Prostate gland (tissue), 2 donors: ENCODE measurements at regions of chr18 and their contacts with region 1.

Region 1: DNA sequence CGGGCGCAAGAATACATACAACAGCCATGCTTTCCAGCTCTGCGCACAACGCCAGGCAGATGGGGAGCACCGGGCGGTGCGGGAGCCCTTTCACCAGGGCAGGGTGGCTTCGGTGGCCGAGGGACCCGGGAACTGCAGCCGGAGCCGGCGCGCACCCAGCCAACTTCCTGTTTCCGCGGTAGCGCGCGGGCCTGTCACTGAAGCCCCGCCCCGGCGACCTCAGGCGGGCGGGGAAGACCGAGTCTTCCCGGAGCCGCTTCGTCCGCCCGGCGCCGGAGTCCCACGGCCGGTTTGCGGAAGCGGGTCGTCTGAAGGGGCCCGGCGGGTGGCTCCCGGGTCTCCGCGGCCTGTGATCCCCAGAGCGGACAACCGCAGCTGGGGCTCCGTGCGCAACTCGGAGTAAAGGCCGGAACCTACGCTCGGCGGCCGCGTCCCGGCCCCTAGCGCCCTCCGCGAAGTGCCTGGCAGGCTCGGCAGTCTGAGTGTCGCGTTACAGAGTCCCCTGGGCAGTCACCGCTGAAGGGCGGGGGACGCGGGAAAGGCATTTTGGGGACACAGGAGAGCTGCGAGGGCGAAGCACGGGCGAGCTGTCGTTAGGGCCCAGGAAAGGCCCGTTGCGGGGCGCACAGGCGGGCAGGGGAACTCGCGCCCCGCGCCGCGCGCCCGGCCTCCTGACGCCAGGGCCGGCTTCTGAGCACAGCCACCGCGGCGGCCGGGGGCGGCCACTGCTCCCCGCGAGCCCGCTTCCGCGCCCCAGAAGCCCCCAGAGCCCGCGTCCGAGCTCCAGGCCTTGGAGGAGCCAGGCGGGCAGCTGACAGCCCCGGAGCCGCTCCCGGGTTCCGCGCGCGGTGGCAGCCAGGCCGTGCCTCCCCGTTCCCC is at the start of gene MPPE1:
- DNase-seq: peak; percentile 86
- H3K4me3 ChIP-seq: peak within 1 kb of the TSS; percentile 76 to 92
- H3K27ac ChIP-seq: peak within 1 kb of the TSS; percentile 97 to 100
- H3K4me1 ChIP-seq: peaks cover 5% of the 10 kb centered on the region
- H3K27me3 ChIP-seq: no peaks in the 10 kb centered on the region
- CTCF ChIP-seq: peak in 1 of 4 experiments; percentile 4
- POLR2A ChIP-seq: peak; percentile 93
- total RNA-seq, gene MPPE1: 19.3 to 29.1 TPM

Region 2: DNA sequence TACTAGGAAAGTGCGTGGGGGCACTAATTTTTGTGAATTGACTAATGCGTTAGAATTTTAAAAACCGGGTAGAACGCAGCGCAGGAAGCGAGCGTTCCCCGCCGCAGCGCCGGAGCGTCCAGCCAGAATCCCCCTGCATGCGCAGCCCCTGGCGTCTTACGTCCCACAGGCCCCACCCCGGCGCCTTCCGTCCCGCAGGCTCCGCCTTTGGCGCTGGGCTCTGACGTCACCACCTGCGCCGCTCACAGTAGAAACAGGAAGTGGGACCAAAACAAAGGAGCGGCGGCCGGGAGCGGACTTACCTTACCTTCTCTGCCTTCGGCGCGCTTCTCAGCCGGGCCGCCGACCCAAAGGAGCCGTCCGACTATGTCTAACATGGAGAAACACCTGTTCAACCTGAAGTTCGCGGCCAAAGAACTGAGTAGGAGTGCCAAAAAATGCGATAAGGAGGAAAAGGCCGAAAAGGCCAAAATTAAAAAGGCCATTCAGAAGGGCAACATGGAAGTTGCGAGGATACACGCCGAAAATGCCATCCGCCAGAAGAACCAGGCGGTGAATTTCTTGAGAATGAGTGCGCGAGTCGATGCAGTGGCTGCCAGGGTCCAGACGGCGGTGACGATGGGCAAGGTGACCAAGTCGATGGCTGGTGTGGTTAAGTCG is 57.1 kb before region 1 on chr18 and contains the start of gene CHMP1B:
- intact Hi-C with region 1: loop called (anchors 2 kb)
- DNase-seq: peak; percentile 98
- H3K4me3 ChIP-seq: peak within 1 kb of the TSS; percentile 77 to 94
- H3K27ac ChIP-seq: peak within 1 kb of the TSS; percentile 87 to 91
- H3K4me1 ChIP-seq: no peaks in the 10 kb centered on the region
- H3K27me3 ChIP-seq: no peaks in the 10 kb centered on the region
- CTCF ChIP-seq: peak in 2 of 4 experiments; percentile 28 to 36
- POLR2A ChIP-seq: peak; percentile 98
- total RNA-seq, gene CHMP1B: 42.8 to 50.0 TPM

Region 3: GRCh38 chr18:11980555-11981382 is 72.3 kb after region 1 on chr18:
- intact Hi-C with region 1: loop called (anchors 2 kb)
- DNase-seq: peak; percentile 99
- H3K4me3 ChIP-seq: peak overlapping the region; percentile 71 to 86
- H3K27ac ChIP-seq: peak overlapping the region; percentile 90 to 95
- H3K4me1 ChIP-seq: peaks cover 4% of the 10 kb centered on the region
- H3K27me3 ChIP-seq: no peaks in the 10 kb centered on the region
- CTCF ChIP-seq: peak in 1 of 4 experiments; percentile 20
- POLR2A ChIP-seq: peak; percentile 81